CD8-positive, alpha-beta T cell (primary cell): ENCODE measurements at regions of chr10 and their contacts with region 1.

Region 1: GRCh38 chr10:93816123-93816747 is 58.5 kb downstream of the LGI1 start:
- DNase-seq: peak in 3 of 9 experiments; percentile 7 to 30 (median 23)
- ATAC-seq: no peak
- H3K4me3 ChIP-seq: no peak overlapping the region
- H3K4me3 Mint-ChIP-seq: no peak overlapping the region
- H3K27ac ChIP-seq: no peak overlapping the region
- H3K27ac Mint-ChIP-seq: no peak overlapping the region
- H3K4me1 ChIP-seq: no peaks in the 10 kb centered on the region
- H3K4me1 Mint-ChIP-seq: no peaks in the 10 kb centered on the region
- H3K27me3 ChIP-seq: peaks cover 0 to 3% of the 10 kb centered on the region in 2 experiments
- H3K27me3 Mint-ChIP-seq: peaks cover 24% of the 10 kb centered on the region
- CTCF ChIP-seq: no peak

Region 2: GRCh38 chr10:93097386-93097785 is 718.8 kb before region 1 on chr10:
- CTCF ChIA-PET with region 1: no interaction called
- POLR2A ChIA-PET with region 1: no interaction called
- intact Hi-C with region 1: no loop called
- DNase-seq: no peak
- ATAC-seq: no peak
- H3K4me3 ChIP-seq: no peak overlapping the region
- H3K4me3 Mint-ChIP-seq: no peak overlapping the region
- H3K27ac ChIP-seq: no peak overlapping the region
- H3K27ac Mint-ChIP-seq: no peak overlapping the region
- H3K4me1 ChIP-seq: no peaks in the 10 kb centered on the region
- H3K4me1 Mint-ChIP-seq: no peaks in the 10 kb centered on the region
- H3K27me3 ChIP-seq: no peaks in the 10 kb centered on the region
- H3K27me3 Mint-ChIP-seq: peaks cover 2% of the 10 kb centered on the region
- CTCF ChIP-seq: no peak

Region 3: GRCh38 chr10:93149761-93150160 is 666.5 kb before region 1 on chr10:
- CTCF ChIA-PET with region 1: no interaction called
- POLR2A ChIA-PET with region 1: no interaction called
- intact Hi-C with region 1: loop called in 1 of 2 experiments (anchors 10 kb)
- DNase-seq: no peak
- ATAC-seq: no peak
- H3K4me3 ChIP-seq: no peak overlapping the region
- H3K4me3 Mint-ChIP-seq: no peak overlapping the region
- H3K27ac ChIP-seq: no peak overlapping the region
- H3K27ac Mint-ChIP-seq: no peak overlapping the region
- H3K4me1 ChIP-seq: peaks cover 14% of the 10 kb centered on the region
- H3K4me1 Mint-ChIP-seq: peaks cover 20% of the 10 kb centered on the region
- H3K27me3 ChIP-seq: no peaks in the 10 kb centered on the region
- H3K27me3 Mint-ChIP-seq: peaks cover 11% of the 10 kb centered on the region
- CTCF ChIP-seq: no peak

Region 4: DNA sequence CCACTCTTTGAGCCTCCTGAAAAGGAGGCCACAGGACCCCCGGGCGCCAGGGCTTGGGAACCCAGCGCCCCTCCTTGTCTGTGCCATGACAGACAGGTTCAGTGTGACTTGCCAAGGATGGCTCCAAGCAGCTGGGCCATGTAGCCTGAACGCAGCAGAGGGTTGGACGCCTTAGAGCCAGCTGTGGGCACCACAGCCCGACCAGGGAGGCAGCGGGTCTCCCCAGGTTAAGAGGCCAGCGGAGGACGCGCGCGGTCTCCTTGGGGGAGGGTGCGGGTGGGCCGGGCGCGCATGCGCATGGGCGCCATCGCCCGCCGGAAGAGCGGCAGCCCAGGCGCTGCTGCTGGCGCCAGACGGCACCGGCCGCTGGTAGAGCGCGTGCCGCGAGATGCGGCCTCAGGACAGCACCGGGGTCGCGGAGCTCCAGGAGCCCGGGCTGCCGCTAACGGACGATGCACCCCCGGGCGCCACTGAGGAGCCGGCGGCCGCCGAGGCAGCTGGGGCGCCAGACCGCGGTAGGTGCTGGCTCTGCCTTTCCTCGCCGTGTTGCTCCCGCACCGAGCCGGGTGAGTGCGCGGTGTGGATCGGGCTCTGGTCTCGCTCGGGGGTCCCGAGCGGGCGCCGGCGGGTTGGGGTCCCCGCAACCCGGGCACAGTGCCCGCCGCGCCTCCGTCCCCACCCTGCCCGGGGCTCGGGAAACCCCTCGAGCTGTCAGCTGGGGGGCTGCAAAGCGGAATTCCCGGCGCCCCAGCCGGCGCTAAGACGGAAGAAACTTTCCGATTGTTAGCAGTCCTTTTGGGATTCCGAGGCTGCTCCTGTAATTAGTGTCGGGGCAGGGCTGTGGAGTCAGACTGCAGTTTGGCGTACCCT is 77.6 kb after region 1 on chr10 and contains the start of gene SLC35G1:
- CTCF ChIA-PET with region 1: no interaction called
- POLR2A ChIA-PET with region 1: no interaction called
- intact Hi-C with region 1: no loop called
- DNase-seq: peak; percentile 40 to 86 (median 67)
- ATAC-seq: peak; percentile 85
- H3K4me3 ChIP-seq: peak within 1 kb of the TSS; percentile 56 to 60
- H3K4me3 Mint-ChIP-seq: peak within 1 kb of the TSS; percentile 83
- H3K27ac ChIP-seq: peak within 1 kb of the TSS in 1 of 2 experiments; percentile 17
- H3K27ac Mint-ChIP-seq: peak within 1 kb of the TSS; percentile 45
- H3K4me1 ChIP-seq: peaks cover 11% of the 10 kb centered on the region
- H3K4me1 Mint-ChIP-seq: peaks cover 37% of the 10 kb centered on the region
- H3K27me3 ChIP-seq: no peaks in the 10 kb centered on the region
- H3K27me3 Mint-ChIP-seq: peaks cover 14% of the 10 kb centered on the region
- CTCF ChIP-seq: no peak
- total RNA-seq, gene SLC35G1: 0.94 to 1.9 TPM

Region 5: GRCh38 chr10:93916257-93917063 is 100.2 kb after region 1 on chr10:
- CTCF ChIA-PET with region 1: no interaction called
- POLR2A ChIA-PET with region 1: no interaction called
- intact Hi-C with region 1: loop called (anchors 5 to 10 kb)
- DNase-seq: no peak
- ATAC-seq: no peak
- H3K4me3 ChIP-seq: no peak overlapping the region
- H3K4me3 Mint-ChIP-seq: no peak overlapping the region
- H3K27ac ChIP-seq: no peak overlapping the region
- H3K27ac Mint-ChIP-seq: no peak overlapping the region
- H3K4me1 ChIP-seq: no peaks in the 10 kb centered on the region
- H3K4me1 Mint-ChIP-seq: peaks cover 2% of the 10 kb centered on the region
- H3K27me3 ChIP-seq: no peaks in the 10 kb centered on the region
- H3K27me3 Mint-ChIP-seq: no peaks in the 10 kb centered on the region
- CTCF ChIP-seq: no peak

Region 6: DNA sequence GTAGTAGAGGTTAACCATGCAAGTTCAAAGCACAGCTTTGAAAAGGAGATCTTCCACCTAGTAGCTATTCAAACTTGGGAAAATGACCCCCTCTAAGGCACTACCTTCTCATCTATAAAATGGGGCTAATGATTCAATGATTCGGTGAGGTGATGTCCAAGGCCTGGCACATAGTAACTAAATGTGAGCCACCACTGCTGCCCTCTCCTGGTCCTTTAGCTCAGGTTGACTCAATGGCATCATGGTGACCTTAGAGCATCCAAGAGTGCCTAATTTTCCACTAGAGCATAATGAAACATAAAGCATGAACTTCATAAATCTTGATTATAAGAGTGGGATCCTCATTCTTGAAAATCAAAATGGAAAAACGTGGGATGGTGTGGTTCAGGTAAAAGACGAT is 161.2 kb after region 1 on chr10:
- CTCF ChIA-PET with region 1: no interaction called
- POLR2A ChIA-PET with region 1: no interaction called
- intact Hi-C with region 1: no loop called
- DNase-seq: no peak
- ATAC-seq: no peak
- H3K4me3 ChIP-seq: no peak overlapping the region
- H3K4me3 Mint-ChIP-seq: no peak overlapping the region
- H3K27ac ChIP-seq: no peak overlapping the region
- H3K27ac Mint-ChIP-seq: no peak overlapping the region
- H3K4me1 ChIP-seq: no peaks in the 10 kb centered on the region
- H3K4me1 Mint-ChIP-seq: no peaks in the 10 kb centered on the region
- H3K27me3 ChIP-seq: no peaks in the 10 kb centered on the region
- H3K27me3 Mint-ChIP-seq: peaks cover 6% of the 10 kb centered on the region
- CTCF ChIP-seq: no peak